Activated T-helper 2 cell treated with anti-CD3 and anti-CD28 coated beads, Interferon-gamma antibody, Interleukin-2, Interleukin-4, amounts not matched to agents 10 μg/mL and 5 μg/mL and 100 μg/mL, durations not matched to agents 14 hours and 24 hours and 36 hours (primary cell): ENCODE measurements at regions of chrX and their contacts with region 1.

Region 1: DNA sequence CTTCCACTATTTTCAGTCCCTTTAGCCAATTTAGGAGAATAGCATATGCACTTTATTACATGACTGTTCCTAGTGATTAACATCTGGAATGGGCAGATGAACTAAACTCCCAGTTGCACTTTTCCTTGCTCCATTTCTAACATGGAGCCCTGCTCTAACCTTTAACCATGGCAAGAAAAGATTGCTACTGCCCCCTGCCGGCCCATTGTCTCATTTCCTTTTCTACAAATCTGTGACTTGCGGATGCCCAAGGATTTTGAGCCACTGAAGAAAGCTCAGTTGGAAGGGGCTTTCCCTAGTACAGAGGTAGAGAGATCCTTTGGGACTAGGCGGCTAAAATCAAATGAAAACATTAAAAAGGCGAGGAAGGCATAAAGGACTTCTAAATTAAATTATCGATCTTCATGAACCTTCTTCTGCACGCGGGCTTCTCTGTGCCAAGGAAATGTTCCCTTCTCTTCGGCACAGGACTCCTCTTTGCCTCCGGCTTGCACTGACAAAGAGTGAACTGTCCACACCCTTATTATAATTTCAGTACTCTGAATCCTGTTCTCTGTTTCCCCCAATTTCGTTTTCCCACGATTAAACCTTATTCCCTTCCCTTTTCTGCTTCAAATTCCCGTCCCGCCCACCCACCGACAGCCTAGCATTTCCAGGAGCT is 577 bp upstream of the GLRA2 start:
- DNase-seq: peak; percentile 12
- H3K4me3 Mint-ChIP-seq: no peak overlapping the region
- H3K27ac Mint-ChIP-seq: no peak overlapping the region
- H3K4me1 Mint-ChIP-seq: no peaks in the 10 kb centered on the region
- H3K27me3 Mint-ChIP-seq: peaks cover 2% of the 10 kb centered on the region

Region 2: DNA sequence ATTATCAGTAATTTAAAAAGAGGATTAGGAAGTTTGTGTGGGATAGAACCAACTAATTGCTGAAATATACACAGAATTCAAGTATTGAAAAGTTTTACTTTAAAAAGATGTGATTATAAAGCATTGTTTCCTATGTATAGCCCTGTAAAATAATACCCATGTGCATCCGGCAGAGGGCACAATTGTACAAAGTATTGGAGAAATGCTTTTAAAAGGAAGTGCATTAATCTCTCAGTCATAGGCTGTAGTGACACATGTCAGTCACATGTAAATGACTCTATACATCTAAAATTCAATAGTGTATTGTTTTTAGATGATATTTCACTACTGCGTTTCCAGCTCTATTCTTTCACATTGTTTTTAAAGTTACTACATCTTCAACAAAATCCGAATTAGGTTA is 489.4 kb before region 1 on chrX:
- intact Hi-C with region 1: loop called (anchors 5 kb)
- DNase-seq: peak; percentile 23
- H3K4me3 Mint-ChIP-seq: no peak overlapping the region
- H3K27ac Mint-ChIP-seq: no peak overlapping the region
- H3K4me1 Mint-ChIP-seq: no peaks in the 10 kb centered on the region
- H3K27me3 Mint-ChIP-seq: peaks cover 16% of the 10 kb centered on the region

Region 3: GRCh38 chrX:14490136-14490535 is 38.6 kb before region 1 on chrX:
- intact Hi-C with region 1: no loop called
- DNase-seq: no peak
- H3K4me3 Mint-ChIP-seq: no peak overlapping the region
- H3K27ac Mint-ChIP-seq: no peak overlapping the region
- H3K4me1 Mint-ChIP-seq: peaks cover 9% of the 10 kb centered on the region
- H3K27me3 Mint-ChIP-seq: no peaks in the 10 kb centered on the region